Activated CD8-positive, alpha-beta T cell treated with anti-CD3 and anti-CD28 coated beads, Interleukin-2, amount 10 ng/mL, durations not matched to agents 7 days and 5 days (primary cell): ENCODE measurements at regions of chr17 and their contacts with region 1.

Region 1: GRCh38 chr17:73429440-73430164 is 117.8 kb upstream of the CDC42EP4 start:
- DNase-seq: peak; percentile 91
- ATAC-seq: peak; percentile 94
- H3K4me3 Mint-ChIP-seq: no peak overlapping the region
- H3K27ac Mint-ChIP-seq: peak overlapping the region; percentile 72
- H3K4me1 Mint-ChIP-seq: peaks cover 24% of the 10 kb centered on the region
- H3K27me3 Mint-ChIP-seq: no peaks in the 10 kb centered on the region

Region 2: DNA sequence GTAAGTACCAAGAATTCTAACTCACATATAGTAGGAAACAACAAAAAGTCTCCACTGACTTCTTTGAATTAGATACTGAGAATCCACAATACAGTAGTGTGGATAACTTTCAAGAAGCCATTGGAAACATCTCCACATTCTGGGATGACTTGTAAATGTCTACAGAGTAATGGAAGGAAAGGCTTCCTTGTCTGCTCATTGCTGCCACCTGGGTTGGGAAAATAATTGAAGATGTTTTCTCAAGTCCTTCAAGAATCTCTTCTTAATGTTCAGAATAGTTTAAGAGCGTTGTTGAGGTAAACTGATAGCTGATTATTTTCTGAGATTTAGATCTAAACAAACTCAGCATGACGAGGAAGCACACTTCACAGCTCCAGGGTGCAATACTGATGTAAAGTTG is 181.9 kb before region 1 on chr17:
- CTCF ChIA-PET with region 1: no interaction called
- POLR2A ChIA-PET with region 1: no interaction called
- DNase-seq: no peak
- ATAC-seq: no peak
- H3K4me3 Mint-ChIP-seq: no peak overlapping the region
- H3K27ac Mint-ChIP-seq: no peak overlapping the region
- H3K4me1 Mint-ChIP-seq: no peaks in the 10 kb centered on the region
- H3K27me3 Mint-ChIP-seq: no peaks in the 10 kb centered on the region

Region 3: DNA sequence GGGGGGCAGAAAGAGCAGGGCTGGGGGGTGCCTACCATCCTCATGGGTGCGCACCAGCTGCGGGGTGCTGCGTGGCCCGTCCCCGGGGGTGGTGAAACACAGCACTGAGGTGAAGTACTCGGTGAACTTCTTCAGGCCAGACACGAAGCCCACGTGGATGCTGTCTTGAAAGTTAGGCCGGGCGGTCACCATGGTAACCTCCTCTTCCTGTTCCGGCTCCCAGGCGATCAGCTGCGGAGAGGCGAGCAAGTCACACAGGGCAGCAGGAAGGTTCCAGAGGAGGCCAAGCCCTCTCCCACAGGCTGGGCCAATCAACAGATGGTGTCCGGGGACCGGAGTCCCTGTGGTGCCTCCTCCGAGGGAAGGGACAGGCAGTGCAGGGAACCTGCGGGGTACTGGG is 27.7 kb before region 1 on chr17:
- CTCF ChIA-PET with region 1: no interaction called
- POLR2A ChIA-PET with region 1: no interaction called
- DNase-seq: peak; percentile 27
- ATAC-seq: peak; percentile 30
- H3K4me3 Mint-ChIP-seq: no peak overlapping the region
- H3K27ac Mint-ChIP-seq: no peak overlapping the region
- H3K4me1 Mint-ChIP-seq: no peaks in the 10 kb centered on the region
- H3K27me3 Mint-ChIP-seq: no peaks in the 10 kb centered on the region

Region 4: DNA sequence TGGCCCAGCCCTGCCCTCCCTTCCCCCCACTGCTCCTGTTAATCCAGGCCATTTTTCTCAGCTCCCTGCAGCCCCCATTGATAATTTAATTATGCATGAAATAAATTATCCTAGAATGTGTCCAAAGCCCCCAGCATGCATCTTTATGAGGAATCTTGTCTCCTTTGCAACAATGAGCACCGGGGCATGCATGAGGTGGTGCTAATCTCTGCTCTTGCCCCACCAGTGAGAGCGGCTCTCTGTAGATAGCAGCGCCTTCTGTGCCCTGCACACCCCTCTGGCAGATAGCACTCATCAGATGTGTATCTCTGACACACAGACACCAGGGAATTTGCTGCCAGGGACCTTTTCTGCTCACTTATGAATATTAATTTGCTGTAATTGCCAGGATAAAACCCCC is 22.4 kb after region 1 on chr17:
- CTCF ChIA-PET with region 1: no interaction called
- POLR2A ChIA-PET with region 1: no interaction called
- DNase-seq: no peak
- ATAC-seq: no peak
- H3K4me3 Mint-ChIP-seq: no peak overlapping the region
- H3K27ac Mint-ChIP-seq: no peak overlapping the region
- H3K4me1 Mint-ChIP-seq: no peaks in the 10 kb centered on the region
- H3K27me3 Mint-ChIP-seq: no peaks in the 10 kb centered on the region

Region 5: DNA sequence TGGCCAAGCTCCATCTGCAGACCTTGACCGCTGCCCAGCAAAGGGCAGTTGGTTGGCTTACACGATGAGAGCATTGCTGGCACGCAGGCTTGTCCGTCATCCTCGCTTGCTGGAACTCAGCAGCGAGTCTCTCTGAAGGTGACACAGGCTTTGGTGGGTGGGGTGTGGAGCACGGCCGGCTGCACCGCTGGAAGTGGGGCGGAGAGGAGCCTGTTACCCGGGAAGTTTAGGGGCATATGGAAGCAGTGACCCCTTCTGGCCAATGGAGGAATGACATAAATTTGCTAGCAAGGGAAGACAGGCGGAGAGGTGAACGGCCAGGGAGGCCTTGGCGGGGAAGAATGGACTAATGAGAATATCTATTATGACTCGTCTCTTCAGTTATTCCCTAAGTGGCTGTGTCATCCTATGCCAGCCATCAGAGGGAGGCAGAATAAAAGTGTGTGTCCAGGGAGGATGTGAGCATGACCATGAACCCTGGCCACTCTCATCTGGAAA is 280.5 kb after region 1 on chr17:
- CTCF ChIA-PET with region 1: interaction called, 62 read pairs
- POLR2A ChIA-PET with region 1: no interaction called
- DNase-seq: peak; percentile 82
- ATAC-seq: peak; percentile 66
- H3K4me3 Mint-ChIP-seq: no peak overlapping the region
- H3K27ac Mint-ChIP-seq: no peak overlapping the region
- H3K4me1 Mint-ChIP-seq: peaks cover 13% of the 10 kb centered on the region
- H3K27me3 Mint-ChIP-seq: peaks cover 17% of the 10 kb centered on the region

Region 6: DNA sequence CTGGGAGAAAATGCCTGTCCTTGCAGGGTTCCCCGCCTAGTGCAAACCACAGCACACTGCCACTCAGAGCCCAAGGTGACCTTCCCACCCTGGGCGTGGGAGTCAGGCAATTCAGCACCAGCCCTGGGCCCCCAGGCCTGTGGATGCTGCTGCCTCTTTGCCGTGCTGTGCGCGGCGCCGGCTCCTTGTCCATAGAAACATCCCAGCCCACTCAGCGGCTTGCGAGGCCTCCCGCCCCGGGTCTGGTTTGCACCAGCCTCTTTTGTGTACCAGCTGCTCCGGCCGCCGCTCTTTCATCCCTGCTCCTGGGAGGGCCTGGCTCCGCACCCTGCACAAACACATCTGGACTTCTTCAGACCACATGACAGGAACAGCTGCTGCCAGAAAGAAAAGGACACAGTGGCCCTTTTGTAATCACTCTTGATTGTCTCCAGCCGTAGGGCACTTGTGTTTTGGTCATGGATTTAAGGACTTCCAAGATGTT is 290.0 kb after region 1 on chr17:
- CTCF ChIA-PET with region 1: interaction called, 15 read pairs
- POLR2A ChIA-PET with region 1: no interaction called
- DNase-seq: no peak
- ATAC-seq: no peak
- H3K4me3 Mint-ChIP-seq: no peak overlapping the region
- H3K27ac Mint-ChIP-seq: peak overlapping the region; percentile 59
- H3K4me1 Mint-ChIP-seq: peaks cover 42% of the 10 kb centered on the region
- H3K27me3 Mint-ChIP-seq: peaks cover 18% of the 10 kb centered on the region

Region 7: DNA sequence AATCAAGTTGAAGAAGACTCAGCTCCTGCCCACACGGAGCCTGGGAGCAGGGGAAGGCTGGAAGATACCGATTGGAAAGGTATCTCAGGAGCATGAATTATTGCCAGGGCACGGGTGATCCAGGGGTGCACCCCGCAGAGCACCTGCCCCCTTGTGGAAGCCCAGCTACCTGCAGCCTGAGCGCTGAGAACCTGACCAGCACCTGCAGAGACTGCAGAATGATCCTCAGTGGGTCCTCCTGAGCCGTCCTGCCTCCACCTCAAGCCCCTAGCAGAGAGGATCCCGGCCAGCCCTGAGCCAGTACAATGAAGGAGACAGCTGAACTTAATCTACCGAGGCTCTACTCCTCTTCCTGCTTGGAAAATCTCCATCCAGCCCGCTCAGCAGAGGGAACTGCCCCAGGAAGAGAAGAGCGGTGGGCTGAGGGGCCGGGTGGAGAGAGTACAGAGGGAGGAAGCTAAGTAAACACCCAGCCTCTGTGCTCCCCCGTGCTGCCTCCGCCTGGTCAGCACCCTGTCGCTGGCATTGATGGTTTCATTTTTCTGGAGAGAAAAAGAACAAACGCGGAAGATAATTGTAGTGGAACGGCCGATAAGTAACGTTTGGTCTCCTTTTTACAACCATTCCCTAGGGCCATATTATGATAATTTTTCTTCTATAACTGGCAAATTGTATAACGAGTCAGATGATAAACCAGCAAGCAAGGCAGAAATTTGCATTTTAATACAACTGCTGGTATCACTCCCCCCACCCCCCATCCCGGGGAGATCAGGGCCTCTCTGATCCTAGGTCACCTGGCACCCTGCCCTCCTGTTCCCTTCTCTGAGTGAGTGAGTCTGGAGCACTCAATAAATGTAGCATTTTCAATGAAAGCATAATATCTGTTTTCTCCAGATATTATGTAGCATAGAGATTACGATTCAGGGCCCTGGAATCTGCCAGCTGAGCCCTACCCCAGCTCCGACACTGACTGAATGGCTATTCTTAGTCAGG is 569.3 kb after region 1 on chr17:
- CTCF ChIA-PET with region 1: interaction called, 14 read pairs
- POLR2A ChIA-PET with region 1: no interaction called
- DNase-seq: peak; percentile 70
- ATAC-seq: peak; percentile 81
- H3K4me3 Mint-ChIP-seq: no peak overlapping the region
- H3K27ac Mint-ChIP-seq: no peak overlapping the region
- H3K4me1 Mint-ChIP-seq: no peaks in the 10 kb centered on the region
- H3K27me3 Mint-ChIP-seq: no peaks in the 10 kb centered on the region